ENCODE measurements at regions of chr6 and their contacts with region 1.

Region 1: GRCh38 chr6:87832025-87832825 is 130.2 kb upstream of the AKIRIN2 start:
- DNase-seq: no peak
- H3K4me3 ChIP-seq: peak overlapping the region; percentile 52 to 55
- H3K27ac ChIP-seq: no peak overlapping the region
- H3K4me1 ChIP-seq: no peaks in the 10 kb centered on the region
- H3K27me3 ChIP-seq: no peaks in the 10 kb centered on the region
- CTCF ChIP-seq: peak; percentile 15 to 48 (median 27)

Region 2: GRCh38 chr6:88870717-88871330 is 1038.6 kb after region 1 on chr6:
- intact Hi-C with region 1: loop called (anchors 10 kb)
- DNase-seq: no peak
- H3K4me3 ChIP-seq: no peak overlapping the region
- H3K27ac ChIP-seq: no peak overlapping the region
- H3K4me1 ChIP-seq: peaks cover 0 to 9% of the 10 kb centered on the region in 2 donors
- H3K27me3 ChIP-seq: no peaks in the 10 kb centered on the region
- CTCF ChIP-seq: peak; percentile 51 to 79 (median 64)

Measured in ascending aorta (tissue), 2 donors.